Sigmoid colon (tissue), 7 donors: ENCODE measurements at regions of chr16 and their contacts with region 1.

Region 1: DNA sequence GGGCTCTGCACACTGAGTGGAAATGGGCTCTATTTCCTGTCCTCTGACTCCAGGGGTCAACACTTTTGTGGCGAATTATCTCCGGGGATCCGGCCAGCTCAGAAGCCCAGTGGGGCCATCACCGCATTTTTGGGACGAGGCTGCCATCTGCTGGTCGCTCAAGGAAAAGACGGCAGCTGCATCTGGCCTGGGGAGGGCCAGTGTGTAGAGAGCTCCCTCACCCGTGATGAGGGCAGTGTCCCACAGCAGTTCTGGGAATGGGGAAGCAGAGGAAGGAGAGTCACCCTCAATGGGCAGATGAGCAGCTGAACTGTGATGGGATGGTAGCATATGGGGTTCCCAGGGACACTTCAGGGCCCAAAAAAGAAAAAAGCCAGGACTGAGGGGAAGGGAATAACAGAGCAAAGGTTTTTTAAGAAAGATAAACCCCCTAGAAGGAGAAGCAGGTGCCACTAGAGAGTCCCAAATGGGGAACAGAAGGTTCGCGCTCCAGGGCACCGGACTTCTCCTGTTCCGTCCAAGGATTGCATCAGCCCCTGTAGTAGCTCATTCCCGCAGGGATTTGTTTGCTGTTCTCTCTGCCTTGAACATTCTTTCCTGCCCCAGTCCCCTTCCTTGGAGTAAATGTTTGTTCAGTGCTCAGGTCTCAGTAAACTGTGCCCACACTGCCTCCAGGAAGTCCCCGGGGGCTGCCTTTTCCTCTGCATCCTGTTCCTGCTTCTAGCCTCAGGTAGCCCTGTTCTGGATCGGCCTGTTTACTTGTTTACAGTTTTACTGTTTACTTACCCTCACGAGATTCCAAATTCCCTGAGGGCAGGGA is 9.3 kb upstream of the ABCC12 start:
- DNase-seq: peak; percentile 80
- H3K4me3 ChIP-seq: no peak overlapping the region
- H3K27ac ChIP-seq: no peak overlapping the region
- H3K4me1 ChIP-seq: peaks cover 0 to 3% (median 0%) of the 10 kb centered on the region in 4 donors
- H3K27me3 ChIP-seq: no peaks in the 10 kb centered on the region
- CTCF ChIP-seq: peak; percentile 46 to 78 (median 69)
- EP300 ChIP-seq: no peak
- POLR2A ChIP-seq: no peak

Region 2: GRCh38 chr16:46947900-46948547 is 1217.1 kb before region 1 on chr16:
- intact Hi-C with region 1: loop called (anchors 5 kb)
- DNase-seq: no peak
- H3K4me3 ChIP-seq: no peak overlapping the region
- H3K27ac ChIP-seq: no peak overlapping the region
- H3K4me1 ChIP-seq: no peaks in the 10 kb centered on the region
- H3K27me3 ChIP-seq: no peaks in the 10 kb centered on the region
- CTCF ChIP-seq: peak in 1 of 4 experiments; percentile 24
- EP300 ChIP-seq: no peak
- POLR2A ChIP-seq: no peak

Region 3: GRCh38 chr16:47037746-47038458 is 1127.2 kb before region 1 on chr16:
- intact Hi-C with region 1: loop called (anchors 5 kb)
- DNase-seq: peak; percentile 91
- H3K4me3 ChIP-seq: peak overlapping the region; percentile 45 to 67 (median 55)
- H3K27ac ChIP-seq: peak overlapping the region; percentile 58 to 74 (median 64)
- H3K4me1 ChIP-seq: peaks cover 0 to 12% (median 2%) of the 10 kb centered on the region in 4 donors
- H3K27me3 ChIP-seq: no peaks in the 10 kb centered on the region
- CTCF ChIP-seq: peak; percentile 65 to 98 (median 79)
- EP300 ChIP-seq: no peak
- POLR2A ChIP-seq: no peak